ENCODE measurements at regions of chr5 and their contacts with region 1.

Region 1: GRCh38 chr5:172984243-172984953 is 827 bp downstream of the ATP6V0E1 start:
- DNase-seq: peak; percentile 90
- H3K4me3 ChIP-seq: peak overlapping the region; percentile 96
- H3K27ac ChIP-seq: peak overlapping the region; percentile 79
- H3K4me1 ChIP-seq: peaks cover 15% of the 10 kb centered on the region
- CTCF ChIP-seq: peak; percentile 86

Region 2: DNA sequence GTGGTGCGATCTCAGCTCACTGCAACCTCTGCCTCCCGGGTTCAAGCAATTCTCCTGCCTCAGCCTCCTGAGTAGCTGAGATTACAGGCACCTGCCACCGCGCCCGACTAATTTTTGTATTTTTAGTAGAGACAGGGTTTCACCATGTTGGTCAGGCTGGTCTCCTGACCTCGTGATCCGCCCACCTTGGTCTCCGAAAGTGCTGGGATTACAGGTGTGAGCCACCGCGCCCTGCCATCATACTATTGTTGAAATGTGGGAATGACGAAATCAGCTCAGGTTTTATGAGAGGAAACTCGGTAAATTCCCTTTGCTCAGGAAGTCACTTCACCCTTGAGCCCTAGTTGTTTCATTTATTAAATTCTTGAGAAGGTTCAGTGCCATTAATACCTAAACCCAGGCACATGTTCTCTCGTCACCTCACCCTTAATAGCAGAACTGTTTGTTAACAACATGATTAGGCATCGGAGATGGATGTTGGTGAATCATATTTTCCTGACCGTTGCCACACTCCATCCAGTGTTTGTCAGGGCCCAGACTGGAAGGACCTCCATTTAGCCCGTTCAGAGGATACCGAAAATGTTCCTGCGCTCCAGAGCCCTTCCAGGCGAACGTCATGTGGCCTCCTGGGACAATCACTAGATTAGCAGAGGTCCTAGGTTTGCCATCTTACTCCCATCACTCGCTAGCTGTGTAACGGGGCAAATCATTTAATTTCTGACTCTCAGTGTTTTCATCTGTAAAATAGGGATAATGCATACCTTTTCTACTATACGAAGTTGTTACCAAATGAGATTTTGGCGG is 51.7 kb after region 1 on chr5:
- CTCF ChIA-PET with region 1: interaction called, 4 read pairs
- POLR2A ChIA-PET with region 1: interaction called, 47 read pairs
- intact Hi-C with region 1: loop called (anchors 1 kb)
- DNase-seq: peak; percentile 45
- H3K4me3 ChIP-seq: peak overlapping the region; percentile 61
- H3K27ac ChIP-seq: peak overlapping the region; percentile 96
- H3K4me1 ChIP-seq: peaks cover 54% of the 10 kb centered on the region
- CTCF ChIP-seq: no peak

Region 3: GRCh38 chr5:173057062-173057924 is 72.9 kb after region 1 on chr5:
- CTCF ChIA-PET with region 1: interaction called, 11 read pairs
- POLR2A ChIA-PET with region 1: interaction called, 25 read pairs
- intact Hi-C with region 1: loop called (anchors 1 kb)
- DNase-seq: peak; percentile 98
- H3K4me3 ChIP-seq: peak overlapping the region; percentile 89
- H3K27ac ChIP-seq: peak overlapping the region; percentile 83
- H3K4me1 ChIP-seq: peaks cover 40% of the 10 kb centered on the region
- CTCF ChIP-seq: no peak

Region 4: DNA sequence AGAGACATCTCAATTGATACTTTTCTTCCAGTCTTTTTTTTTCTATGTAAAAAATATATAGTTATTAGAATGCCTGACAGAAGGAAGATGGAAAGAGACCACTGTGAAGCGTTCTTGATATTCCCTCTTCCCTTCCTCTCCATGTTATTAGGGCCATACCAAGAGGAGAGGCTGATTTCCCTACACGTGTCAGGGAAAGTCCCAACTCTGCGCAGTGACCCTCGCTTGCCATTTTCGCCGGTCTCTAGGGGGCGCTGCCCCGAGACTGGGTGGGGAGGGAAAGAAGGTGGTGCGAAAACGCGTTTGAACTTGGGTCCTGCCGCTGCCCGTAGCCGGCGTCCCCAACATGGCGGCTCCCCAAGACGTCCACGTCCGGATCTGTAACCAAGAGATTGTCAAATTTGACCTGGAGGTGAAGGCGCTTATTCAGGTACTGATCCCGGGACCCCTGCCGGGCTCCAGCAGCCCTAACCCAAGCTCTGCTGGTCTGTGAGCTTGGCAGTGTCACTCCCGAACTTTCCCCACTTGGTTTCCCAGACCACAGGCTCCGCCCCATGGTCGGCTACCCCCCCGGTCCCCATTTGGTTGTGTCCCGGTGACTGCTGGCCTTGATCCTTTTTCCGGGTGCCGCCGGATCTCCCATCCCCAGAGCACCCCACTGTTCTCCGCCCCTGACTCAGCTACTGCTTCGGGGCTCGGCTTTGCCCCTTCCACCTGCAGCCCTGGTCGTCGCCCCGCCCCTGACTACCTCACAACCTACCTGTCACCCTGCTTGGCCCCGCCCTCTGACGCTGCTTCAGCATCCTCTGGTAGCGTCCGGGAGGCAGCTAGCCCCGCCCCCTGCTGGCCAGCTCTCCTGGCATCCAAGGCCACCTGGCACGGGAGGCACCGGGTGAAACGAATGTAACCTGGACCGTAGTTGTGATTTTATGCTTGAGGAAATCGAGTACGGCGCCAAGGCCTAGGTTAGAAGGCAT is 160.1 kb after region 1 on chr5 and contains the start of gene BNIP1:
- CTCF ChIA-PET with region 1: interaction called, 5 read pairs
- POLR2A ChIA-PET with region 1: no interaction called
- intact Hi-C with region 1: loop called (anchors 1 kb)
- DNase-seq: peak; percentile 95
- H3K4me3 ChIP-seq: peak within 1 kb of the TSS; percentile 98
- H3K27ac ChIP-seq: peak within 1 kb of the TSS; percentile 74
- H3K4me1 ChIP-seq: peaks cover 11% of the 10 kb centered on the region
- CTCF ChIP-seq: peak; percentile 83
- total RNA-seq, gene BNIP1: 15.2 and 23.1 TPM in 2 replicates

Region 5: GRCh38 chr5:173187054-173187789 is 202.8 kb after region 1 on chr5:
- CTCF ChIA-PET with region 1: no interaction called
- POLR2A ChIA-PET with region 1: no interaction called
- intact Hi-C with region 1: loop called (anchors 1 kb)
- DNase-seq: peak; percentile 62
- H3K4me3 ChIP-seq: no peak overlapping the region
- H3K27ac ChIP-seq: no peak overlapping the region
- H3K4me1 ChIP-seq: no peaks in the 10 kb centered on the region
- CTCF ChIP-seq: peak; percentile 70

Region 6: GRCh38 chr5:173283318-173284288 is 299.2 kb after region 1 on chr5:
- CTCF ChIA-PET with region 1: no interaction called
- POLR2A ChIA-PET with region 1: no interaction called
- intact Hi-C with region 1: loop called (anchors 5 kb)
- DNase-seq: peak; percentile 23
- H3K4me3 ChIP-seq: no peak overlapping the region
- H3K27ac ChIP-seq: no peak overlapping the region
- H3K4me1 ChIP-seq: no peaks in the 10 kb centered on the region
- CTCF ChIP-seq: peak; percentile 70

Region 7: GRCh38 chr5:173331956-173332479 is 347.6 kb after region 1 on chr5:
- CTCF ChIA-PET with region 1: no interaction called
- POLR2A ChIA-PET with region 1: no interaction called
- intact Hi-C with region 1: loop called (anchors 2 kb)
- DNase-seq: peak; percentile 82
- H3K4me3 ChIP-seq: no peak overlapping the region
- H3K27ac ChIP-seq: no peak overlapping the region
- H3K4me1 ChIP-seq: no peaks in the 10 kb centered on the region
- CTCF ChIP-seq: peak; percentile 90